Mammary epithelial cell (primary cell): ENCODE measurements at regions of chr20 and their contacts with region 1.

Region 1: GRCh38 chr20:7770578-7770977 is 169.7 kb downstream of the HAO1 start:
- DNase-seq: peak; percentile 63
- H3K4me3 ChIP-seq: no peak overlapping the region
- H3K27ac ChIP-seq: no peak overlapping the region
- H3K4me1 ChIP-seq: peaks cover 14% of the 10 kb centered on the region
- H3K27me3 ChIP-seq: no peaks in the 10 kb centered on the region
- CTCF ChIP-seq: no peak

Region 2: GRCh38 chr20:7736336-7736735 is 34.2 kb before region 1 on chr20:
- CTCF ChIA-PET with region 1: no interaction called
- dilution Hi-C with region 1: no loop called
- in situ Hi-C with region 1: no loop called
- intact Hi-C with region 1: loop called (anchors 5 kb)
- DNase-seq: peak; percentile 86
- H3K4me3 ChIP-seq: no peak overlapping the region
- H3K27ac ChIP-seq: peak overlapping the region; percentile 95
- H3K4me1 ChIP-seq: peaks cover 28% of the 10 kb centered on the region
- H3K27me3 ChIP-seq: no peaks in the 10 kb centered on the region
- CTCF ChIP-seq: no peak

Region 3: GRCh38 chr20:7841971-7842310 is 71.4 kb after region 1 on chr20:
- CTCF ChIA-PET with region 1: no interaction called
- dilution Hi-C with region 1: no loop called
- in situ Hi-C with region 1: no loop called
- intact Hi-C with region 1: loop called (anchors 5 kb)
- DNase-seq: peak; percentile 91
- H3K4me3 ChIP-seq: no peak overlapping the region
- H3K27ac ChIP-seq: peak overlapping the region; percentile 92
- H3K4me1 ChIP-seq: peaks cover 37% of the 10 kb centered on the region
- H3K27me3 ChIP-seq: no peaks in the 10 kb centered on the region
- CTCF ChIP-seq: no peak